ENCODE measurements at regions of chr6 and their contacts with region 1.

Region 1: DNA sequence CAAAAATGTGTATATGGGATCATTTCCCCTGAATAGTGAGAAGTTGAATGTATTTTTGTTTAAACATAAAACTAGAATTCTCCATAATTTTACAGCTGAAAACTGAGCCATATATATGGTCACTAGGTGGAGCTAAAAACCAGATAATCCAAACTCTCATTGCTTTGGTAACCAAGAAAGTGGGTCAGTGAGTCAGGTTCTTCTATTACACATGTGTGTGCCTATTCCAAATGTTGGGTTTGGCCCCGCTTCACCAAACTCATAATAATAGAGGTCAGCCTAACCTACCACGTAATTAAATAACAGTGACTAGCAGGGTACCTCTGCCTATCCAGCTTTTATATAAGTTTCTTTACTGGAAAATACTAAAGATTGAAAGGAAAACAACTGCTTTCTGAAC is 19.3 kb upstream of the RNGTT start:
- DNase-seq: peak; percentile 37 to 69
- ATAC-seq: peak; percentile 98 to 100 (median 98)
- H3K4me3 ChIP-seq: peak overlapping the region; percentile 24
- H3K27ac ChIP-seq: peak overlapping the region; percentile 62
- H3K4me1 ChIP-seq: peaks cover 12% of the 10 kb centered on the region
- H3K27me3 ChIP-seq: no peaks in the 10 kb centered on the region
- CTCF ChIP-seq: peak; percentile 79

Region 2: GRCh38 chr6:88870717-88871330 is 111.9 kb before region 1 on chr6:
- intact Hi-C with region 1: no loop called
- DNase-seq: no peak
- ATAC-seq: peak in 3 of 4 donors; percentile 54 to 85 (median 62)
- H3K4me3 ChIP-seq: no peak overlapping the region
- H3K27ac ChIP-seq: no peak overlapping the region
- H3K4me1 ChIP-seq: peaks cover 18% of the 10 kb centered on the region
- H3K27me3 ChIP-seq: no peaks in the 10 kb centered on the region
- CTCF ChIP-seq: peak; percentile 80

Region 3: GRCh38 chr6:89022798-89023197 is 40.1 kb after region 1 on chr6:
- intact Hi-C with region 1: loop called (anchors 2 to 5 kb)
- DNase-seq: no peak
- ATAC-seq: peak in 3 of 4 donors; percentile 19 to 48 (median 19)
- H3K4me3 ChIP-seq: no peak overlapping the region
- H3K27ac ChIP-seq: peak overlapping the region; percentile 75
- H3K4me1 ChIP-seq: peaks cover 30% of the 10 kb centered on the region
- H3K27me3 ChIP-seq: no peaks in the 10 kb centered on the region
- CTCF ChIP-seq: no peak

Region 4: GRCh38 chr6:89117211-89118108 is 134.7 kb after region 1 on chr6 and contains the start of gene SRSF12:
- intact Hi-C with region 1: loop called (anchors 2 to 10 kb)
- DNase-seq: peak; percentile 40 to 66
- ATAC-seq: peak; percentile 72 to 84 (median 80)
- H3K4me3 ChIP-seq: peak within 1 kb of the TSS; percentile 80
- H3K27ac ChIP-seq: peak within 1 kb of the TSS; percentile 54
- H3K4me1 ChIP-seq: peaks cover 20% of the 10 kb centered on the region
- H3K27me3 ChIP-seq: no peaks in the 10 kb centered on the region
- CTCF ChIP-seq: no peak
- total RNA-seq, gene SRSF12: 0.21 to 0.71 (median 0.24) TPM

Region 5: GRCh38 chr6:89242574-89243330 is 260.0 kb after region 1 on chr6:
- intact Hi-C with region 1: loop called (anchors 2 to 5 kb)
- DNase-seq: no peak
- ATAC-seq: peak in 3 of 4 donors; percentile 53 to 87 (median 65)
- H3K4me3 ChIP-seq: no peak overlapping the region
- H3K27ac ChIP-seq: peak overlapping the region; percentile 27
- H3K4me1 ChIP-seq: peaks cover 3% of the 10 kb centered on the region
- H3K27me3 ChIP-seq: no peaks in the 10 kb centered on the region
- CTCF ChIP-seq: peak; percentile 56

Region 6: DNA sequence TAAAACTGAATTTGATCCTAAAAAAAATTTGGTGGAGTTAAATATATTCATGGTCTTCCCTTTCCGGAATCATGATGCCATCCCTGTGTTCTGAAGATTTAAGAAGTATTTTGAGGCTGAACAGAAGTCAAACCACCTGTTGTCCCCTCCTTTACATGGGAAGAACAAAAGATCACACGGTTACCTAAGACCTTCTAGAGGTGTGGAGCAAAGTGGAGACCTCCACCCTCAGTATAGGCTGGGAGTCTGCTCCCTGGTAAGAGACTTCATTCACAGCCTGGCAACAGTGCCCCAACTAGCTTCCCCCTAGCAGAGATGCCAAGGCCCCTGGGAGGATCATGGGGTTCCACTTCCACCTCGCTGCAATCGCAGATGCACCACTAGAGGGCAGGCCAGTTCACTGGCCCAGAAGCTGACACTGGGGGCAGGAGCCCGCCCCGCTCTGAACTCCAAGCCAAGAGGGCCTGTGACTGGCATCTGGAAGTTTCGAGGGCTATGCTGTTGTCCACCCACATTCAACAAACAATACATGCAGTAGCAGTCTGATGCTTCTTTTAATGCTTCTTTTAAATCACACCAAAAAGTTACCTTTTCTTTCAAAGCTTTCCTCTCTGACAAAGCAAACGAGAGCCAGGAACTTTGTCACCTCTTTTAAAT is 389.3 kb after region 1 on chr6:
- intact Hi-C with region 1: loop called in 1 of 2 experiments (anchors 5 kb)
- DNase-seq: peak; percentile 77 to 88
- ATAC-seq: peak; percentile 79 to 87 (median 82)
- H3K4me3 ChIP-seq: no peak overlapping the region
- H3K27ac ChIP-seq: peak overlapping the region; percentile 53
- H3K4me1 ChIP-seq: peaks cover 24% of the 10 kb centered on the region
- H3K27me3 ChIP-seq: no peaks in the 10 kb centered on the region
- CTCF ChIP-seq: peak; percentile 96